Activated CD4-positive, alpha-beta memory T cell treated with anti-CD3 and anti-CD28 coated beads for 36 hours (primary cell): ENCODE measurements at regions of chr16 and their contacts with region 1.

Region 1: DNA sequence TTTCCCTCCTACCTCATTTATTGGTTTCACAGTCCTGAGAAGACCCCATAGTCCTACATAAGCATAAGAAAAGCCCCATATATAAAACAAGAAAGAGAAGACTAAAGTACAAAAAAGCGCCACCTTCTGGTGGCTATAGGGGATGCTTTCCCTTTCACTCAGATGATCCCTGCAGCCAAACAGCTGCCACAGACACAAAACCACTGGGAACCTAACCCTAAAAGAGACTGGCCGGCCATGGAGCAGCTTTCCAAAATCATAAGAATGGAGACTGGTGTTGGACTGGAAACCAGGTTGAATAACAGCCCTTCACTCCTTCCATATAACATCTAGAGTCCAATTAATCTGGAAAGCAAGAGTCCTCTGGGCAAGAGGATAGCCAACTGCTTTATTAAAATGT is 11.4 kb downstream of the DYNC1LI2 start:
- DNase-seq: peak; percentile 46
- H3K4me3 Mint-ChIP-seq: no peak overlapping the region
- H3K27ac Mint-ChIP-seq: no peak overlapping the region
- H3K4me1 Mint-ChIP-seq: peaks cover 15% of the 10 kb centered on the region
- H3K27me3 Mint-ChIP-seq: no peaks in the 10 kb centered on the region

Region 2: DNA sequence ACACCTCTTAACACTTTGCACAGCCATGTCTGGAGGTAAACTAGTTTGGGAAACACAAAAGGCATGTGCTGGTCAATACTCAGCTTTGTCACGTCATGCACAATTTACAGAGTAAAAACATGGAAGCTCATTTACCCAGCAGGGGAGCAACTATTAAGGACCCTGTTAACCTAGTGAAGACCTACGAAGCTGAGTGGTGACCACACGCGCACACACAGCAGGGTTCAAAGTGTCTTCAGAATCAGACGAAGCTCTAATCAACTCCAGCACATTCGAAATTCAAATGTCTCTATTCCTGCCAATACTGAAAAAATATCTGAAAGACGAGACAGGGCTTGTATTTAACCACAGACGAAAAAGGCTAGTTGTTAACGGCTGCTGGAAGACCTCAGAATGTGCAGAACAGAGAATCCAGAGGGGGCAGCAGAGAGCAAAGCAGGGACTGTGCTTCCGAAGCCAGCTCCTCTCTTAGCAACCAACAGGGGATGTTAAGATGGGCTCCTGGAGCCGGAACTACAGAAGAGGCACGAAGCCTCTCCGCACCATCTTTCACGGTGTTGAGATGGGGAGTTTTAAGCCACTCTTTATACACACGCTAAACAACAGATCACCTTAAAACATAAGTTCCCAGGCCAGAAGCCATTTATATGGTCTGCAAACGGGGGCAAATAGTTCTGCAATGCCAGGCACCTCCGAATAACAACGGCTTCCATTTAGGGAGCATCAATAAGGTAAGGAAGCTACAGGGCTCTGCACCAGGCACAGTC is 89.1 kb before region 1 on chr16:
- CTCF ChIA-PET with region 1: interaction called, 17 read pairs
- POLR2A ChIA-PET with region 1: no interaction called
- intact Hi-C with region 1: loop called (anchors 1 kb)
- DNase-seq: peak; percentile 86
- H3K4me3 Mint-ChIP-seq: peak overlapping the region; percentile 58
- H3K27ac Mint-ChIP-seq: no peak overlapping the region
- H3K4me1 Mint-ChIP-seq: peaks cover 10% of the 10 kb centered on the region
- H3K27me3 Mint-ChIP-seq: peaks cover 5% of the 10 kb centered on the region

Region 3: GRCh38 chr16:66696669-66697630 is 43.1 kb before region 1 on chr16 and contains the start of gene CMTM4:
- CTCF ChIA-PET with region 1: interaction called, 18 read pairs
- POLR2A ChIA-PET with region 1: interaction called, 4 read pairs
- intact Hi-C with region 1: no loop called
- DNase-seq: peak; percentile 79
- H3K4me3 Mint-ChIP-seq: peak within 1 kb of the TSS; percentile 74
- H3K27ac Mint-ChIP-seq: no peak within 1 kb of the TSS
- H3K4me1 Mint-ChIP-seq: no peaks in the 10 kb centered on the region
- H3K27me3 Mint-ChIP-seq: peaks cover 4% of the 10 kb centered on the region
- total RNA-seq, gene CMTM4: 2.8 to 4.1 TPM

Region 4: GRCh38 chr16:66728117-66728787 is 11.8 kb before region 1 on chr16:
- CTCF ChIA-PET with region 1: interaction called, 100 read pairs
- POLR2A ChIA-PET with region 1: no interaction called
- intact Hi-C with region 1: no loop called
- DNase-seq: no peak
- H3K4me3 Mint-ChIP-seq: no peak overlapping the region
- H3K27ac Mint-ChIP-seq: no peak overlapping the region
- H3K4me1 Mint-ChIP-seq: peaks cover 2% of the 10 kb centered on the region
- H3K27me3 Mint-ChIP-seq: no peaks in the 10 kb centered on the region

Region 5: DNA sequence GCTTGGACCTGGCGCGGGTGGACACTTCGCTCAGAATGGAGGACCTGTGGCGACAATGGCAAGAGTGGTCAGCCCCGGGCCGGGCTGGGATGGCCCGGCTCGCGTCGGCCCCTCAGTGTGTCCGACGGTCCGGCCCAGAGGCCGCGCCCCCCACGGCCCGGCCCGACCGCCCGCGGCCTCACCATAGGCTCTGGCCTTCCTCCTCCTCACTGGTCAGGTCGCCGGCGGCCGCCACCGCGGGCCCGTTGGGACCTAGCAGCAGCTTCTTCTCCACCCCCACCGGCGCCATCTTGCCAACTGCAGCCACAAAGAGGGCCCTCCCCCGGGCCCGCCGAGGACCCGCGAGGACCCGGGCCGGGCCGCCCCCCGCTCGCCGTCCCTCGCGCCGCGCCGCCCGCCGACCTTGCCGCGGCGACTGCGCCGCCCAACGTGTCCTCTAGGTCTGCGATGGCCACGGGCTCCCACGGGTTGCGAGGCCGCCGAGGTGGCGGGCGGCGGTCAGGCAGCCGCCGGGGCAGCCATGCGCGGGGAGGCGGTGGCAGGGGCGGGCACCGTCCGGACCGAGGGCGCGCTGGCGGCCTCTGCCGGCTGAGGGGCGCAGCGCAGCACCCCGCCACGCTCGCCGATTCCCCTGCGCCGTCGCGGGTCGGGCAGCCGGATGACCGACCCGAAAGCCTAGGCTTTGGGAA is 11.4 kb after region 1 on chr16 and contains the start of gene DYNC1LI2:
- CTCF ChIA-PET with region 1: interaction called, 29 read pairs
- POLR2A ChIA-PET with region 1: no interaction called
- intact Hi-C with region 1: no loop called
- DNase-seq: peak; percentile 84
- H3K4me3 Mint-ChIP-seq: peak within 1 kb of the TSS; percentile 83
- H3K27ac Mint-ChIP-seq: peak within 1 kb of the TSS; percentile 74
- H3K4me1 Mint-ChIP-seq: peaks cover 37% of the 10 kb centered on the region
- H3K27me3 Mint-ChIP-seq: peaks cover 4% of the 10 kb centered on the region
- total RNA-seq, gene DYNC1LI2: 37.9 to 39.1 TPM